ENCODE measurements at regions of chr5 and their contacts with region 1.

Region 1: GRCh38 chr5:136516637-136517036 is 151.3 kb upstream of the TRPC7 start:
- DNase-seq: no peak
- H3K4me3 ChIP-seq: no peak overlapping the region
- H3K27ac ChIP-seq: no peak overlapping the region
- H3K4me1 ChIP-seq: peaks cover 0 to 4% (median 0%) of the 10 kb centered on the region in 4 experiments; a peak in 1 of 7 replicates
- H3K27me3 ChIP-seq: no peaks in the 10 kb centered on the region
- CTCF ChIP-seq: no peak
- EP300 ChIP-seq: no peak
- POLR2A ChIP-seq: no peak
- RAD21 ChIP-seq: no peak

Region 2: DNA sequence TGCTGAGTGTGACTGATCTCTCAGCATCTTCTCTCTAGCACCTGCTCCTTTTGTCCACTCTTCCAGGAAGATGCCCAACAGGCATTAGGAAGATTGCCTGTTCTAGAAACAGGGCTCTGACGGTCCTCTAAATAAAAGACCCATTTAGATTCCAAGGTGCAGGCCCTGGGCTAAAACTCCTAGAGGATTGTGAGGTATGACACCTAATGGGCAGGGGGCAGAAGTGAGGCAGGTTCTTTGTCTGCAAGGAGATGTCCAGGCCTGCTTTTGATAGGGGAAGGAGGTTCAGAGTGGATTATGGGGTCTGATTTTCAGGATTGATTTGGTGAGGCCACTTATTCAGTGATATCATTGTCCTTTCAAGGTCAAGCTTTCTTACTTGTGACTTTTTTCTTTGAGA is 10.5 kb before region 1 on chr5:
- CTCF ChIA-PET with region 1: interaction called, 14 read pairs
- POLR2A ChIA-PET with region 1: interaction called, 3 read pairs
- DNase-seq: no peak
- H3K4me3 ChIP-seq: no peak overlapping the region
- H3K27ac ChIP-seq: no peak overlapping the region
- H3K4me1 ChIP-seq: peaks cover 0 to under 1% (median 0%) of the 10 kb centered on the region in 4 experiments; a peak in 2 of 7 replicates
- H3K27me3 ChIP-seq: no peaks in the 10 kb centered on the region
- CTCF ChIP-seq: peak in 2 of 3 experiments; percentile 26 to 39; a peak in 3 of 4 replicates
- EP300 ChIP-seq: no peak
- POLR2A ChIP-seq: no peak
- RAD21 ChIP-seq: peak; percentile 3 to 46; a peak in 3 of 4 replicates